Activated CD4-positive, alpha-beta T cell treated with anti-CD3 and anti-CD28 coated beads, Interleukin-2, amount 10 ng/mL, durations not matched to agents 7 days and 5 days (primary cell): ENCODE measurements at regions of chr10 and their contacts with region 1.

Region 1: DNA sequence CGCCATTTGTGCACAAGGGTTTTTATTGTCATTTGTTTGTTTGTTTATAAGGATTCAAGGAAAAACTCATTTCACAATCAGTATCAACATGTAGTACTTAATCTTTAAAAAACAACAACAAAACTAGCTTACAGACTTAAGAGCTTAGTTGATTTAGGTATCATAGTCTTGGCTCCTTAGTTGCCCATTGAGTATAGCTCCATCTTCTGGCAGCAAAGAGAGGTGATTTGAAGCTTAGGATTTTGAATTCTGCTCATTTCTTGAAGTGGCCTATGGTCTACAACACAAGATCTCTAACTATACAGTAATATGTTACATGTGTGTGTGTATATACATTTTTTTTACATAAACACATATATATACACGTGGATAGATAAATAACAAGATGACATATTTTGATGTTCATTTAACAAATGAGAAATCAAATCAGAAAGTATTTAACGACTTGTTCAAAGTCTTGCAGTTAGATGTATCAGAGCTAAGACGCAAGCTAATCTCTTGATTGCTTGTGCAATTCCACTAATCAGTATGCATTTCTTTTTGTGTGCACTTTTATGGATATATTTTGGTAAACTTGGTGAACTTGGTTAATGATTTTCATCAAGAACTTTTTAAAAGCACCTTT is 307.3 kb downstream of the CAMK1D start:
- DNase-seq: peak; percentile 26
- H3K4me3 Mint-ChIP-seq: no peak overlapping the region
- H3K27ac Mint-ChIP-seq: no peak overlapping the region
- H3K4me1 Mint-ChIP-seq: peaks cover 13% of the 10 kb centered on the region
- H3K27me3 Mint-ChIP-seq: no peaks in the 10 kb centered on the region

Region 2: DNA sequence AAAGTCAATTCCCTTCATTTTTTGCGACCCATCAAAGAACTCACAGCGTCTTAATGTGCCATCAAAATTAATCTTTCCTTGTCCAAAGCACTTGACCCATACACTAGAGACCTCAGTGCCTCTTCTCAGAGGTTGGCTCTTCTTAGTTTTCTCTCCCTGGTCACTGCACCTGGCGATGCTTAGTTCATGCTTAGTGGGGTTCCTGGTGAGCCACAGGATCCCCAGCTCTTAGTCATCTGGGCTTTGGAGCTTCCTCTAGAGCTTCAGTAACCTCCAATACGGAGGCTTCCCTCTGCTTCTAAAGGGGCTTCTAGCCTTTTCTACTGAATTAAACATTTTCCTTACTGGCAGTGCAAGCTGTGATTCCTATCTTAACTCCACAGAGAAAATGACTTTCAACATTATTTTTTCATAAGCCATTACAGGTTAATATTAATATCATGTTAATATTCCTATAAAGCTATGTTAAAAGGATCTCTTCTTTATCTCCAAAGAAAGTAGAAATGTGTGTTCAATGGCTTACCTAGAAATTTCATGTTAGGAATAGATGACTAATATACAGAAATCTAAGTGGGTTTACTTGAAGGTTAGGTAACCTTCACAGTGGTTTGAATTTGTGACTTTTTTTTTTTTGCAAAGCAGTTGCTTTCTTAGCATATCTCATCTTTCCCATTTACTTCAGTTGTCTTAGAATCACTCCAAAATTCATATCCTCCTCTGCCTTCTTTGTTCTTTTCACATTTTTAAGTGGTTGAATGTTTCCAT is 12.1 kb before region 1 on chr10:
- CTCF ChIA-PET with region 1: interaction called, 11 read pairs
- POLR2A ChIA-PET with region 1: no interaction called
- DNase-seq: no peak
- H3K4me3 Mint-ChIP-seq: no peak overlapping the region
- H3K27ac Mint-ChIP-seq: no peak overlapping the region
- H3K4me1 Mint-ChIP-seq: peaks cover 21% of the 10 kb centered on the region
- H3K27me3 Mint-ChIP-seq: no peaks in the 10 kb centered on the region